Activated T-helper 1 cell treated with anti-CD3 and anti-CD28 coated beads, Interleukin-12 subunit alpha, Interleukin-12 subunit beta, Interleukin-2, Interleukin-4 antibody, amounts not matched to agents 30 ng/mL and 10 ng/mL and 1 ng/mL, durations not matched to agents 14 hours and 24 hours and 36 hours (primary cell): ENCODE measurements at regions of chr12 and their contacts with region 1.

Region 1: DNA sequence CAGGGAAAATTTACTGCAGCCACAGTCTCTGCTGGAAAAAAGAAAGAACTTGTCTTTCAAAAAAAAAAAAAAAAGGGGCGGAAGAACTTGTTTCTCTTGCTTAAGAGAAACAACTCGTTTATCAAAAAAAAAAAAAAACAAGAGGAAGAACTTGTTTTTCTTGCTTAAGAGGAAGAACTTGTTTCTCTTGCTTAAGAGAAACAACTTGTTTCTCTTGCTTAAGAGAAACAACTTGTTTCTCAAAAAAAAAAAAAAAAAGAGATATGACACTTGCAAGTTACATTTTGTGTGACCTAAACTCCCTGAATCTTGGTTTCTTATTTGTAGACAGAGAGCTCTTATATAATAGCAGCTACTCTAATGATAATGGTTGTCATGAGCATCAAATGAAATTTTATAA is 44.7 kb upstream of the USP15 start:
- DNase-seq: no peak
- H3K4me3 Mint-ChIP-seq: peak overlapping the region; percentile 48
- H3K27ac Mint-ChIP-seq: peak overlapping the region; percentile 58
- H3K4me1 Mint-ChIP-seq: peaks cover 21% of the 10 kb centered on the region
- H3K27me3 Mint-ChIP-seq: peaks cover 19% of the 10 kb centered on the region

Region 2: GRCh38 chr12:62250671-62251608 is 35.4 kb after region 1 on chr12:
- intact Hi-C with region 1: loop called (anchors 2 kb)
- DNase-seq: peak; percentile 31
- H3K4me3 Mint-ChIP-seq: peak overlapping the region; percentile 44
- H3K27ac Mint-ChIP-seq: peak overlapping the region; percentile 89
- H3K4me1 Mint-ChIP-seq: peaks cover 41% of the 10 kb centered on the region
- H3K27me3 Mint-ChIP-seq: no peaks in the 10 kb centered on the region

Region 3: DNA sequence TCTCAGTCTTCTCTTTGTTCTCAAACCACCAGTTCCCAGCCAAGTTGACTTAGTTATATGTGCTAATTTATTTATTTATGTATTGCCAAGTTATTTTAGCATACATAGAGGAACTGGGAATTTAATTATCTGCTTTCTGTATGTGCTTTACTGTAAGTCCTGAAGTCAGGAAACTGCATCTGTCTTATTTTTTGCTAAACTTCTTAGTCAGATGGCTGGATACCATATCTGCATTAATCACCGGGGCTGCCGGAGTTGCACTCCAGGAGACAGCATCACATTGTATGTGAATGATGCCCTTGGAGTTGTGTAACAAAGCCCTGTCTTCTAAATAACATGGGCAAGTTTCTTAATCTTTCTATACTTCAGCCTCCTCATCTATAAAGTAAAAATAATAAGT is 347.3 kb after region 1 on chr12:
- intact Hi-C with region 1: no loop called
- DNase-seq: no peak
- H3K4me3 Mint-ChIP-seq: no peak overlapping the region
- H3K27ac Mint-ChIP-seq: no peak overlapping the region
- H3K4me1 Mint-ChIP-seq: no peaks in the 10 kb centered on the region
- H3K27me3 Mint-ChIP-seq: no peaks in the 10 kb centered on the region